GM12878 (cell line): ENCODE measurements at regions of chr14 and their contacts with region 1.

Region 1: DNA sequence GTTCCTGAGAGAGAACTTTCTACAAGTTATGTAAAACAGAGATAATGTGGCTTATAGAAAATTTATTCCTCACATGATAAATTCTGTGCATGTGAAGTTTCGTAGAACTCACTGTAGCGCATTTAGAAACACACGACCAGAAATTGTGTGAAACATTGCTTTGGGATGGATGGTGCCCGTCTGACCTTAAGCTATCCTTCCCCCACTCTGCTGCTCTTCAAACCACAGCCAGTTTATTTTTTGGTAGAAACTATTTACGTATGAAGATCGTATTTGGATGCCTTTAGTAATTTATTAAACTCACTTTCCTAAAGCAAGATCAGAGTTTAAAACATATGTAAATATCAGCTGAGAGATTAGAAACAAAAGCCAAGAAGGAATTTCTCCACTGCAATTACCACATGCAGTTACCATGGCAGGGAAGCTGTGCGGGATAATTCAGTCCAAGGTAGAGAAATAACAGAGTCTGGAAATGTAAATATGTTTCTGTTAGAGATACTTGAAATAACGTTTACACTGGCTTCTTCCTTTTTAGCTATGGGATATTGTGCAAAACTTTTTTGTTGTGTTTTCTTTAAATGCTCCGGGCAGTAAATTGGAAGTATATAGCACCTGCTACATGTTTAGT is 382.7 kb downstream of the RGS6 start:
- DNase-seq: no peak
- ATAC-seq: no peak
- H3K4me3 ChIP-seq: no peak overlapping the region
- H3K27ac ChIP-seq: no peak overlapping the region
- H3K4me1 ChIP-seq: no peaks in the 10 kb centered on the region
- H3K27me3 ChIP-seq: no peaks in the 10 kb centered on the region
- CTCF ChIP-seq: no peak
- EP300 ChIP-seq: no peak
- POLR2A ChIP-seq: no peak
- RAD21 ChIP-seq: no peak

Region 2: DNA sequence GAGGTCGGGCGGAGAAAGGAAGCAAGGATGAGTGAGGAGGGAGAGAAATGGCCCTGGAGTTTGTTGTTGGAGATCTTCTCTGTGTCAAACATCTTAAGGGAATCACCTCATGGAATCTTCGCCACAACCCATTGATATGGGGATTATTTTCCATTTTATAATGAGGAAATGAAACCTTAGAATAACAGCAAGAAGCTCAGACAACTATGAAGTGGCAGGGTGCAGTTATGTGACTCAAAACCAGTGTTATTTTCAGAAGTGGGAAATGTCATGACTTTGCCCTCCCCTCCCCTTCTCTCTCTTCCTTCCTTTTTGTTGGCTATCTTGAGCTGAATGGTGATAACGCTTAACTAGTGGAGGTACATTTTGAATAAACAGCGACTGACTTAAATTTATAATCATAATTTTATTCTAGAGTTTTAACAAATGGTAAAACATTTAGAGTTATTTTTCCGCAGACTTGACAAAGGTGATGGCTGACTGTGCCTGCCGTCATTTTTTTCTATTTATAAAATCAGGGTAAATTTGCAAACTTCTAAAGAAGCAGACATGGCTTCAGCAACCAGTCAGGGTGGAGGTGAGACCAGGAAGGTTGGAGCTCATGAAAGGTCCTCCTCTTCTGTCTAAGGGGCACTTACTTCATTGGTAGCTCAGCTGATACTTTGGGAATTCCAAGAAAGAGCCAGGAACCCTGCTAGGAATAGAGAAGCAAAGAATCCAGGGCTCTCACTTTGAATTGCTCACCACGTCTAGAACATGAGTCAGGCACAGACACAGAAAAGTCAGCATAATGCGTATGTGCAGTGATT is 150.3 kb before region 1 on chr14:
- CTCF ChIA-PET with region 1: no interaction called
- POLR2A ChIA-PET with region 1: no interaction called
- RAD21 ChIA-PET with region 1: no interaction called
- SMC1A ChIA-PET with region 1: no interaction called
- in situ Hi-C with region 1: no loop called
- intact Hi-C with region 1: no loop called
- DNase-seq: peak; percentile 23
- ATAC-seq: peak; percentile 92
- H3K4me3 ChIP-seq: no peak overlapping the region
- H3K27ac ChIP-seq: no peak overlapping the region
- H3K4me1 ChIP-seq: no peaks in the 10 kb centered on the region; the same call in 1 of the 2 replicates
- H3K27me3 ChIP-seq: no peaks in the 10 kb centered on the region
- CTCF ChIP-seq: no peak
- EP300 ChIP-seq: peak; percentile 62 to 79; a peak in 3 of 4 replicates
- POLR2A ChIP-seq: no peak
- RAD21 ChIP-seq: no peak

Region 3: DNA sequence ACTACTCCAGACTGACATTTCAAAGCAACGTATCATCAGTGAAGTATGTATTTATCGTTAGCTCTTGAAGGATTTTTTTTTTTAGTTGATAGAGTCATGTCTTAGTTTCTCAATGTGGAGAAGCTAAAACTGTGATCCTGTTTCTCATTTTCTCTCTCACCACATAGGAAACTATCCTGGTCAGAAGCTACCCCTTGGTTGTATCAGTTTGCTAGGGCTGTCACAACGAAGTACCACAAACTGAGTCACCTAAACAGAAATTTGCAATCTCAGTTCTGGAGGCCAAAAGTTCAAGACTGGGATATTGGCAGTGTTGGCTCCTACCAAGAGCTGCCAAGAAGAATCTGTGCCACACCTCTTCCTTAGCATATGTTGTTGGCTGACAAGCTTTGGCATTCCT is 13.6 kb before region 1 on chr14:
- CTCF ChIA-PET with region 1: no interaction called
- POLR2A ChIA-PET with region 1: no interaction called
- RAD21 ChIA-PET with region 1: no interaction called
- SMC1A ChIA-PET with region 1: interaction called, 10 read pairs
- in situ Hi-C with region 1: no loop called
- intact Hi-C with region 1: no loop called
- DNase-seq: no peak
- ATAC-seq: no peak
- H3K4me3 ChIP-seq: no peak overlapping the region
- H3K27ac ChIP-seq: no peak overlapping the region
- H3K4me1 ChIP-seq: no peaks in the 10 kb centered on the region
- H3K27me3 ChIP-seq: no peaks in the 10 kb centered on the region
- CTCF ChIP-seq: no peak
- EP300 ChIP-seq: no peak
- POLR2A ChIP-seq: no peak
- RAD21 ChIP-seq: no peak